Breast epithelium (tissue), 4 donors: ENCODE measurements at regions of chr2 and their contacts with region 1.

Region 1: DNA sequence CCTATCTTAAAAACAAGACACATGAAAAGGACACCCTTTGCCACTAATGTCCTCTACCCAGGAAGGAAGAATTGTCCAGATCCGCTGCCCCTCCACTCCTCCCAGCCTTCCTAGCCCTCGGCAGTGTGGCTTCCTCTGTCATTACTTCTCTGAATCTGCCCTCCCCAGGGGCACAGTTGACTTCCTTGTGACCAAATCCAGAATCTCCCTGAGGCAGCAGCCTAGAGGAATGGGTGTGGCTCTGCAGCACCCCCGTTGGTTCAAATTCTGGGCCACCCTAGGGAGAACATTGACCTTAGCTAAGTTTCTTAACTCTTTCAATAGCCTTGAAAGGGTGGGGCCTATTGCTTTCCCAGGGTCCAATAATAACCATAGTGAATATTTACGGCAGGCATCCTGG is 99.4 kb downstream of the LYPD1 start:
- DNase-seq: no peak
- H3K4me3 ChIP-seq: no peak overlapping the region
- H3K27ac ChIP-seq: no peak overlapping the region
- H3K4me1 ChIP-seq: no peaks in the 10 kb centered on the region
- H3K27me3 ChIP-seq: no peaks in the 10 kb centered on the region
- CTCF ChIP-seq: no peak
- POLR2A ChIP-seq: no peak

Region 2: DNA sequence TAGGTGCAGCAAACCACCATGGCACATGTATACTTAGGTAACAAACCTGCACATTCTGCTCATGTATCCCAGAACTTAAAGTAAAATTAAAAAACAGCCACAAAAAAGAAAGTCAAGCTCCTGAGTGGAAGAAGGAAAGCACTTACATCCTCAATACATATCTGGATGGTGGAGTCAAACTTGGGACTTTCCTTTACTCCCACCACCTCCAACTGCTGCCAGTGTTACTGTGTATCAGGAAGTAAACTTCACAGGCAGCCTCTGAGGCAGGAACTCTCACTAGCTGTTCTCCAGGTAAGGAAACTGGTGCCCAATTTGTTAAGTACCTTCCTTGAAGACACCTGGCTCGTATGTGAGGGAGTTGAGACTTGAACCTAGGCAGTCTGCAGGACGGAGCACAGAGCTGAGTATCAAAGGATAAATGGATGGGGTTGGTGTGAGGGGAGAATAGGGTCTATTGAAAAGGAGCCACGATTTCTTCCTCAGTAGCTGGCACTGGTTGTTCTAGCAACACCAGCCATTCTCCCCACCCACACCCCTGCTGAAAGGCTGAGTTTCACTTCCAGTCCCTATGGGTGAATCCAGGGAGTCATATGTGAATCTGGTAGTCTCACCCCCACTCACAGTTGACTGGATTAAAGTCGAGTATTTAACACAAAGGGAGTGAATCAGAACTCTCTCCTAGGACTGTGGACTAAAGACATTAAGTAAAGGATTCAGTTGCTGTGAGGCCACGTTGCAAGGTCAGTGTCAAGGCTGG is 204.0 kb before region 1 on chr2:
- intact Hi-C with region 1: loop called (anchors 5 kb)
- DNase-seq: no peak
- H3K4me3 ChIP-seq: no peak overlapping the region
- H3K27ac ChIP-seq: no peak overlapping the region
- H3K4me1 ChIP-seq: no peaks in the 10 kb centered on the region
- H3K27me3 ChIP-seq: no peaks in the 10 kb centered on the region
- CTCF ChIP-seq: no peak
- POLR2A ChIP-seq: no peak

Region 3: DNA sequence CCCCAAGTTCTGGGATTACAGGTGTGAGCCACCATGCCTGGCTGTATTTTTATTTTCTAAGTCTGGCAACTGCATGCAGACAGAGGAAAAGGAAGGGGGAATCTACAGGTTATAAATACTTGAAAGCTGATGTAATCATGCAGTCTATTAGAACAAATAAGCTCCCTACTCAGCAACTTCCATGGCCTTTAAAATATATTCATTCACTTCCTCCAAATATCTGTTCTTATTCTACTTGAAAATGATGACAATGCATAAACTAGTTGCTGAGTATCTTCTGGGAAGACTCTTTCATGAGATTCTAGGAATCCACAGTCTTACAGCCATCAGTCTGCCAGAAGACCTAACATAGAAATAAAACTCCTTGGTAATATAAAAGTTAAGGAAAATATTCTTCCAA is 1064.5 kb after region 1 on chr2:
- intact Hi-C with region 1: loop called (anchors 5 kb)
- DNase-seq: no peak
- H3K4me3 ChIP-seq: no peak overlapping the region
- H3K27ac ChIP-seq: no peak overlapping the region
- H3K4me1 ChIP-seq: no peaks in the 10 kb centered on the region
- H3K27me3 ChIP-seq: no peaks in the 10 kb centered on the region
- CTCF ChIP-seq: no peak
- POLR2A ChIP-seq: no peak